Esophagus squamous epithelium (tissue), 5 donors: ENCODE measurements at regions of chr7 and their contacts with region 1.

Region 1: DNA sequence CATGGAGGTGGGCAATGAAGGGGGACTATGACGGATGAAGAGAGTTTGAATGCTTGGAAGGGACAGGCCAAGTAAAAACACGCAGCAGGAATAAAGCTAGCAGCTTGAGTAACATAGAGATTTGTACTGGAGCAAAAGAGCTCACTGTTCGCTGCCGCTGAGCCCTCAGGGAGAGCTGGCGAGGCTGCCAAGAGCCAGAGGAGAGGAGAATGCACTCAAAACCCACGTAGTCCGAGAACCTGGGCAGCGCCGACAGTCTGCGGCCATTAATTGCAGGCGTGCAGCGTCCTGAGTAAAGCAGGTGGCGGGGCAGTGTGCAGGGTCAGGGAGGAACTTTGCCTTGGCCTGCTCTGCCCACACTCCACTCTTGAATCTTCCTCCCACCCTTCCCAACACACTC is 68.2 kb downstream of the SLC37A3 start:
- DNase-seq: no peak
- H3K4me3 ChIP-seq: no peak overlapping the region
- H3K27ac ChIP-seq: no peak overlapping the region
- H3K4me1 ChIP-seq: peaks cover 7 to 13% (median 12%) of the 10 kb centered on the region in 3 donors
- H3K27me3 ChIP-seq: no peaks in the 10 kb centered on the region
- CTCF ChIP-seq: no peak
- POLR2A ChIP-seq: no peak

Region 2: GRCh38 chr7:140010194-140010895 is 319.8 kb before region 1 on chr7:
- intact Hi-C with region 1: loop called (anchors 10 kb)
- DNase-seq: no peak
- H3K4me3 ChIP-seq: no peak overlapping the region
- H3K27ac ChIP-seq: no peak overlapping the region
- H3K4me1 ChIP-seq: no peaks in the 10 kb centered on the region
- H3K27me3 ChIP-seq: peaks cover 0 to 7% (median 0%) of the 10 kb centered on the region in 4 donors
- CTCF ChIP-seq: no peak
- POLR2A ChIP-seq: no peak

Region 3: DNA sequence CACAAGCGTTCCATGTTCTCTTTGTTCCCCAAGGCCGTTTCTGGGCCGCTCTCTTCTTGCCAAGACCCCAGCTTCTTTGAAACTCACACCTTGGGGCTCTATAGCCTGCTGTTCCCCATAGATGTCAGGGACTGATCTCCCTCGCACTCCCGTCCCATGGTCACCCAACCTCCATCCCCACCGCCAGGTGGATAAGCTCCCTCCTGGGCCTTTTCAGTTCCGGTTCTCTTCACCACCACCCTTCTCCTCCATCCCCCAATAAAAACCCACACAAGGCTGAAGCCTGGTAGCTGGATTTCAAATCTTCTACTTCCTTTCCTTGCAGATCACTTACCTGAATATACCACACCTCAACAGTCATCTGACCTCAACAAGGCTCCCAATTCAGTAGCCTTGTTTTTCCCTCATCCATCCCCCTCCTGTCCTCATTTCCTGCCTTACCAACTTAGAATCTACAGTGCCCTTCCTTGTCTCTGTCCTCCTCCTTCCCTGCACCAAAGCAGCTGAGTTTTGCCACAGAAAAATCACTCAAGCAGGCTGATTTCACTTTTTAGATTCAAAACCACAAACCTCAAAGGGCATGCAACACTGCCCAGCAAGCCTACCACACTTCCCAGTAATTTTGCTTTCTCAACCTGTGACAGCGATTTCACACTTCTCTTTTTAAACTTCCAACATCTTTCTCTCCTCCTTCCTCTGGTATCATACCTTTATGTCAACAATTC is 60.5 kb after region 1 on chr7:
- intact Hi-C with region 1: no loop called
- DNase-seq: no peak
- H3K4me3 ChIP-seq: no peak overlapping the region
- H3K27ac ChIP-seq: no peak overlapping the region
- H3K4me1 ChIP-seq: peaks cover 0 to 12% (median 0%) of the 10 kb centered on the region in 3 donors
- H3K27me3 ChIP-seq: no peaks in the 10 kb centered on the region
- CTCF ChIP-seq: no peak
- POLR2A ChIP-seq: no peak